PC-3 (cell line): ENCODE measurements at regions of chr4 and their contacts with region 1.

Region 1: GRCh38 chr4:70687821-70688794 is at the start of gene UTP3:
- DNase-seq: peak; percentile 100
- ATAC-seq: peak; percentile 95
- H3K4me3 ChIP-seq: peak within 1 kb of the TSS; percentile 89
- H3K27ac ChIP-seq: peak within 1 kb of the TSS; percentile 68
- H3K4me1 ChIP-seq: peaks cover 21% of the 10 kb centered on the region
- H3K27me3 ChIP-seq: no peaks in the 10 kb centered on the region
- CTCF ChIP-seq: peak; percentile 99
- total RNA-seq, gene UTP3: 27.8 and 38.5 TPM in 2 replicates

Region 2: GRCh38 chr4:70380578-70380977 is 307.5 kb before region 1 on chr4:
- CTCF ChIA-PET with region 1: no interaction called
- POLR2A ChIA-PET with region 1: no interaction called
- intact Hi-C with region 1: no loop called
- DNase-seq: no peak
- ATAC-seq: no peak
- H3K4me3 ChIP-seq: no peak overlapping the region
- H3K27ac ChIP-seq: no peak overlapping the region
- H3K4me1 ChIP-seq: no peaks in the 10 kb centered on the region
- H3K27me3 ChIP-seq: peaks cover 4% of the 10 kb centered on the region
- CTCF ChIP-seq: no peak

Region 3: DNA sequence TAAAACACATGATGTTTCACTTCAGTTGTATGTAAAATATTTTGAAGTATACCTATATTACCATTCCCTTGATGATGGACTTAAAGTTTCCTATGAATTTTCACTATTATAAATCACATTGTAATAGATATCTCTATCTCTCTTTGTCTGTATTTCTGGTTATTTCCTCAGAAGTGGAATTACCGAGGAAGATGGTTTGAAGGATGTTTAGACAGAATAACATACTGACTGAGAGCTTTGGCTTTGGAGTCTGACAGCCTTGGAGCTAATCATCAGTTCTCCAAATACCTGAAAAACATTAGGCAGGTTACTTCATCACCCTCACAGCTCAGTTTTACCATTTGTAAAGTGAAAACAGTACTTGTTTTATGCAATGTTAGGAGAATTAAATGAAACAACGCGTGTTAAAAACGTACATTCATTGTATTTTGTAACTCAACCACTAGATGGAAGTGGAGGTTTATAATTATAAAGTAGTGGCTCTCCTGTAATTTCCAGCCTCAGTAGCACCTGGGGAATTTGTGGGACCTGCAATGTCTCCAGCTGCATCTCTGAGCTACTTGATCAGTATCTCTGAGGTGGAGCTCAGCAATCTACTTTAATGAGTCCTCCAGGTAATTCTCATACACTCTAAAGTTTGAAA is 36.1 kb before region 1 on chr4:
- CTCF ChIA-PET with region 1: no interaction called
- POLR2A ChIA-PET with region 1: no interaction called
- intact Hi-C with region 1: loop called (anchors 1 kb)
- DNase-seq: peak; percentile 77
- ATAC-seq: peak; percentile 74
- H3K4me3 ChIP-seq: peak overlapping the region; percentile 48; the same call in 1 of the 2 replicates
- H3K27ac ChIP-seq: no peak overlapping the region
- H3K4me1 ChIP-seq: no peaks in the 10 kb centered on the region
- H3K27me3 ChIP-seq: no peaks in the 10 kb centered on the region
- CTCF ChIP-seq: peak; percentile 85

Region 4: GRCh38 chr4:70754470-70754869 is 66.4 kb after region 1 on chr4:
- CTCF ChIA-PET with region 1: no interaction called
- POLR2A ChIA-PET with region 1: no interaction called
- intact Hi-C with region 1: loop called (anchors 10 kb)
- DNase-seq: no peak
- ATAC-seq: no peak
- H3K4me3 ChIP-seq: no peak overlapping the region
- H3K27ac ChIP-seq: no peak overlapping the region
- H3K4me1 ChIP-seq: no peaks in the 10 kb centered on the region
- H3K27me3 ChIP-seq: no peaks in the 10 kb centered on the region
- CTCF ChIP-seq: no peak

Region 5: GRCh38 chr4:70993181-70994068 is 305.3 kb after region 1 on chr4 and contains the start of gene DCK:
- CTCF ChIA-PET with region 1: no interaction called
- POLR2A ChIA-PET with region 1: no interaction called
- intact Hi-C with region 1: loop called (anchors 5 kb)
- DNase-seq: peak; percentile 95
- ATAC-seq: peak; percentile 87
- H3K4me3 ChIP-seq: peak within 1 kb of the TSS; percentile 75
- H3K27ac ChIP-seq: peak within 1 kb of the TSS; percentile 29
- H3K4me1 ChIP-seq: peaks cover 31% of the 10 kb centered on the region
- H3K27me3 ChIP-seq: no peaks in the 10 kb centered on the region
- CTCF ChIP-seq: no peak
- total RNA-seq, gene DCK: 19.5 and 21.0 TPM in 2 replicates

Region 6: DNA sequence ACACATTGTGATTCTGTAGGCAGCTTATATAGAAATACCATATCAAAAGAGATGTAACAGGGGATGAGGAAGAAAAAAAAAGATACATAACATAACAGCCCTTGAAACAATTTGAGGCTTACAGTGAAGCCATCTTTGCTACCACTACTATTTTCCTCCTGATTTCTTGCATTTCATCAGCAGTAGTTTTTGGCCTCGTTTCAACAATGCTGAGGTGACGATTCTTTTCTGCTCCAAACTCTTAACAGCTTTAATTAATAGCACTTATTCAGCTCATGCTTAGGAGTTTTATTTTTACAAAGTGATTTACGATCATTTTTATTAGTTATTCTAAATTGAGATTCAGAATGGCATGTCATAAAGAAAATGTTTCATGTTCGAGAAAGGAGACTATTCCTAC is 468.5 kb after region 1 on chr4:
- CTCF ChIA-PET with region 1: no interaction called
- POLR2A ChIA-PET with region 1: no interaction called
- intact Hi-C with region 1: no loop called
- DNase-seq: no peak
- ATAC-seq: no peak
- H3K4me3 ChIP-seq: no peak overlapping the region
- H3K27ac ChIP-seq: no peak overlapping the region
- H3K4me1 ChIP-seq: peaks cover 2% of the 10 kb centered on the region; the same call in 1 of the 2 replicates
- H3K27me3 ChIP-seq: no peaks in the 10 kb centered on the region
- CTCF ChIP-seq: no peak